PC-9 (cell line): ENCODE measurements at regions of chr14 and their contacts with region 1.

Region 1: DNA sequence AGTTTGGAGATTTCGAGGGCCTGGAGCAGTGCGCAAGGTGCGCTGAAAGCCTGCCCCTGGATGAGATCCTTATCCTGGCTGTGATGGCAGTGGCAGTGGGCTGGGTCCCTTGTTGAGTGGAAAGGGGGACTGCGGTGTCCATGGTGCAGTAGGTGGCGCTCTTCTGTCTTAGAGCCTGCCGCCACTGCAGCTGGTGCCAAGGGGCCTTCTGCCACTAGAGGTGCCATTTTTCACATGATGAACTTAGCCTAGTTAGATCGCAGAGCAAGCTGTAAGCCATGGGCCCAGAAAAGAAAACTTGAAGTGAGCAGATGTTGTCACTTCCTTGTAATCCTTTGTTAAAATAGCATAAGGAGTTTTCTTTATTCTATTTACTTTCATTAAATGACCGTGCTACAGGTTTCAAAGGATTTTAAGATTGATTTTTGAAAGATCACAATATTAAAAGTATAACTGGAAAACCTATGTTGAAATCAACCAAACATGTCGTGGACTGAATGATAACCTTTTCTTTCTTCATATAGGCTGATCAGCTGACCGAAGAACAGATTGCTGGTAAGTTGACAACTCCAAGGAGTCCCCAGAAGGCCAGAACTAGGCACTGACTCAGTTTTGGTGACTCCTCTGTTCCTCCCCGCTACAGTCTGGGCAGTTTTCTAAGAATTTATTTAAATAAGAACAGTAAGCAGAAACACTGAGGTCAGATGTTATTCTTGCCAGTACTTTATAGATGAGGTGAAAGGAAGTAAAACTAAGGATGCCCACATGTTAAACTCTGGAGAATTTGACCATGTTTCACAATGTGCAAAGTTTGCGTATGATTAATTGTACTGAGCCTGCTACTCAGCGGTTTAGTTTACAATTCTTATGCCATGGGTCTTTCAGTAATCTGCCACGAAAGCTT is 3.0 kb downstream of the CALM1 start:
- DNase-seq: peak; percentile 58 to 67
- H3K4me3 ChIP-seq: peak overlapping the region; percentile 86; the same call in 1 of the 2 replicates
- H3K27ac ChIP-seq: no peak overlapping the region
- H3K4me1 ChIP-seq: peaks cover 16% of the 10 kb centered on the region
- H3K27me3 ChIP-seq: no peaks in the 10 kb centered on the region
- CTCF ChIP-seq: peak; percentile 90

Region 2: DNA sequence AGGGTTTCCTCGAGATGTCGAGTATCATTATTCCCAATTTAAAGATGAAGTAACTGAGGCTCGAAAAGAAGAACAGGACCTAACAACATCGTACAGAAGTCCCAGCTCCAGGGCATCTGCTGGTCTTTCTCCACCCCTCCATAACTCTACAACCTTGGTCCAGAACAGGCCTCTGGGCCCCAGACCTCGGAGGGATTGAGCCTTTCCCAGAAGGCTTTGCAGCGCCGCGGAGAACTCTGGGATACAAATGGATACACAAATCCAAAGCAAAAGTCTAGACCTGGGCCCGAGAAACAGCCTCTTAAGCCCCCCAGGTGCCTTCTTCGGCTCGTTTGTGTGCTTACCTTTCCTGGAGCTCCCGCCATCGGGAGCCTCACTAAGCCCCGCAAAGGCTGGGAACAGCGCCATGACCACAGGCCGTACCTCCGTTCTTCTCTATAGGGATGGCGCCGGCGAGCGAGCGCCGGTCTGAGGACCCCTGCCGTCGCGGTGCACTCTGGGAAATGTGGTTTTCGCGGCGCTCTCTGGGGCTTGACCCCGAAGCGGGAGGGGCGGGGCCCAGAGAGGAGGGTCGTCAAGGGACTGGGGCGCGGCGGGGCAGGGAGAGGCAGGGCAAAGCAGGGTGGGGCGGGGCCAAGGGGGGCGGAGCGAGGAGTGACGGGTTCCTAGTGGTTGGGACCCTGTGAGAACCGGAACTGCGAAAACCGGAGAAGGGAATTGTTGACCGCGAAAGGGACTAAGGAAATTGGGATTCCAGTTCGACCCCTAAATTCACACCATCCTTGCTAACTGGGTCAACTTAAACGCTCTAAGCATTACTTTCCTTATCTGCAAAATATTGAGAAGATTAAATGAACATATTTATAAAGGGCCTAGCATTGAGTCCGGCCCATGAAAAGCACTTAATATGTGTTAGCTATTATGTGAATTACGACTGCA is 68.0 kb before region 1 on chr14 and contains the start of gene NRDE2:
- CTCF ChIA-PET with region 1: no interaction called
- POLR2A ChIA-PET with region 1: no interaction called
- intact Hi-C with region 1: loop called (anchors 5 kb)
- DNase-seq: peak; percentile 84 to 86
- H3K4me3 ChIP-seq: peak within 1 kb of the TSS; percentile 65
- H3K27ac ChIP-seq: peak within 1 kb of the TSS; percentile 70
- H3K4me1 ChIP-seq: peaks cover 7% of the 10 kb centered on the region
- H3K27me3 ChIP-seq: no peaks in the 10 kb centered on the region
- CTCF ChIP-seq: no peak
- total RNA-seq, gene NRDE2: 6.5 and 10.1 TPM in 2 replicates

Region 3: DNA sequence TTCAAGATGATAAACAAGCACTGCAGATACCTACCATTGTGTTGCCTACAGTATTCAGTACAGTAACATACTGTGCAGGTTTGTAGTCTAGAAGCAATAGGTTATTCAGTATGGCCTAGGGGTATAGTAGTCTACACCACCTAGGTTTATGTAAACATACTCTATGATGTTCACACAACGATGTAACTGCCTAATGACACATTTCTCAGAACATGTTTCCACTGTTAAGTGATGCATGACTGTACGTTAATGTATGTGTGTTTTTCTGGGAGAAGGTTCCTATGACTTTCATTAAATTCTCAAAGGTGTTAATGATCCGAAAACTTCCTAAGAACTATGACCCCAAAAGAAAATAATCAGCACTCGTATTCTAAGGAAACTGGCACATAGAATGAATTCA is 23.9 kb before region 1 on chr14:
- CTCF ChIA-PET with region 1: no interaction called
- POLR2A ChIA-PET with region 1: no interaction called
- intact Hi-C with region 1: no loop called
- DNase-seq: peak in 1 of 2 experiments; percentile 37
- H3K4me3 ChIP-seq: no peak overlapping the region
- H3K27ac ChIP-seq: no peak overlapping the region
- H3K4me1 ChIP-seq: no peaks in the 10 kb centered on the region
- H3K27me3 ChIP-seq: no peaks in the 10 kb centered on the region
- CTCF ChIP-seq: no peak

Region 4: DNA sequence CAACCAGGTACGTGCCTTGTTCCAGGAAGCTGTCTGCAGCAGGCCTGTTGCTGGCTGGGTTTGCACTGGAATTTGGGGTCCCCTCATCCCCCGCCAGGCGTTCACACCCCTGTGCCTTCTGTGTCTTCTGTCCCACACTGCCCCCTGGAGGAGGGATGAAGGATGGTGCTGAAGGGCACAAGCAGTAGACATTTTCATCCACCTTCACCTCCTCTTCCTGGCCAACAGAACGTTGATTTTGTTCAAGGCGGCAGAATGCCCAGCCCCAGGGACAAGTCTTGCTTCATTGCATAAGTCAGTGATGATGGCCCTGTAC is 119.1 kb after region 1 on chr14:
- CTCF ChIA-PET with region 1: no interaction called
- POLR2A ChIA-PET with region 1: no interaction called
- intact Hi-C with region 1: loop called (anchors 2 kb)
- DNase-seq: no peak
- H3K4me3 ChIP-seq: no peak overlapping the region
- H3K27ac ChIP-seq: no peak overlapping the region
- H3K4me1 ChIP-seq: peaks cover 10% of the 10 kb centered on the region
- H3K27me3 ChIP-seq: no peaks in the 10 kb centered on the region
- CTCF ChIP-seq: peak; percentile 74

Region 5: DNA sequence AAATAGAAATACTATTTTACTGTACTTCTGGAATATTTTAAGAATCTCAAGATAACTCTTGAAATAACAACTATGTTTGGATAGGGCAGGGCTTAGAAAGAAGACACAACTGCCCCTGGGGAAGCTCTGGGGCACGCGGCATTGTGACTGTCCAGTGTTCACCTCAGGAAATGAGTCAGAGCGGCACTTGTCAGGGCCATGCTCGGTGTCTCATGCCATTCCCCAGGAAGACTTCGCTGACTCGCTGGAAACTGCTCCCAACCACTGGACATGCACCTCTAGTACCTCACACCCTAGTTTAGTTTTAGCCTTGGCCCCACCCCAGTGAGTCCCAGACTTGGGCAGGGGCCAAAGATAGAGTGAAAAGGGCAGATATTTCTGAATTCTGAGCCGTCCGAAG is 224.4 kb after region 1 on chr14:
- CTCF ChIA-PET with region 1: no interaction called
- POLR2A ChIA-PET with region 1: no interaction called
- intact Hi-C with region 1: loop called (anchors 10 kb)
- DNase-seq: peak; percentile 55 to 63
- H3K4me3 ChIP-seq: no peak overlapping the region
- H3K27ac ChIP-seq: no peak overlapping the region
- H3K4me1 ChIP-seq: peaks cover 12% of the 10 kb centered on the region
- H3K27me3 ChIP-seq: no peaks in the 10 kb centered on the region
- CTCF ChIP-seq: no peak